ENCODE measurements at regions of chr1 and their contacts with region 1.

Region 1: DNA sequence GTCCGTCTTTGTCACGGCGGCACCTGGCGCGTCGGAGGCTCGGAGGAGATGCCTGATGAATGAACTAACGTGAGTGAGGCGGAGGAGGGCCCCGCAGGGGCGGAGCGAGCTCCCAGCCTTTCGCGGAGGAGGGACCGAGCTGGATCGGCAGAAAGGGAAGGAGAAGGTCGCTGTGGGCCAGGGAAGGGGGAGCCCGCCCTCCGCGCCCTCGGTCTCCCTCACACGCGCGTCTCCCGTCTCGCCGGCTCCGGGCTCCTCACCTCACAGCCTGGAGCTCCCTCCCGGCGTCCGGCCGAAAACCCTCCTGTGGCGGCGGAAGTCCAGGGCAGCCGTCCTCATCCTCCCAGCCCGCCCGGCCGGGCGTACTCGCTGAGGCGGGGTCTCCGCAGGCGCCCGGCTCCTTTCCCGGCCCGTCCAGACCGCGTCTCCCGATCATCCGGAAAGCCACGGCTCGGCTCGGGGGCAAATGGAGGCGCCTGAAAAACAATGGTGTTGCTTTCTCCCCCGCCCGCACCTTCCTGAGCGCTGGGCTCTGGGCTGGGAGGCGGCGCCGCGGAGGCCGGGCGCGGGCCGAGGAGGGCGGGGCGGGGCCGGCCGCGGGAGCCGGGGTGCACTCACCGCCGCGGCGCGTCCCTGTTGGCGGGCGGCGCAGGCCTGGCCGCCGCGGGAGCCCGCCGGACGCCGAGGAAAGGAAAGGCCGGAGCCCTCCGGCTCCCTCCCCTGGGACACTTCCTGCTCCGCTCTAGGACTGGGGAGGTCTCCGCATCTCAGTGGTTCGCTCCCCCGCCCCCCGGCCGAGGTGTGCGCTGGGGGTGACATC is at the start of gene ZNF496:
- DNase-seq: peak; percentile 65
- H3K4me3 Mint-ChIP-seq: peak within 1 kb of the TSS; percentile 92
- H3K27ac Mint-ChIP-seq: peak within 1 kb of the TSS; percentile 90
- H3K4me1 Mint-ChIP-seq: peaks cover 21% of the 10 kb centered on the region
- H3K27me3 Mint-ChIP-seq: no peaks in the 10 kb centered on the region
- total RNA-seq, gene ZNF496: 13.8 and 14.8 TPM in 2 replicates

Region 2: DNA sequence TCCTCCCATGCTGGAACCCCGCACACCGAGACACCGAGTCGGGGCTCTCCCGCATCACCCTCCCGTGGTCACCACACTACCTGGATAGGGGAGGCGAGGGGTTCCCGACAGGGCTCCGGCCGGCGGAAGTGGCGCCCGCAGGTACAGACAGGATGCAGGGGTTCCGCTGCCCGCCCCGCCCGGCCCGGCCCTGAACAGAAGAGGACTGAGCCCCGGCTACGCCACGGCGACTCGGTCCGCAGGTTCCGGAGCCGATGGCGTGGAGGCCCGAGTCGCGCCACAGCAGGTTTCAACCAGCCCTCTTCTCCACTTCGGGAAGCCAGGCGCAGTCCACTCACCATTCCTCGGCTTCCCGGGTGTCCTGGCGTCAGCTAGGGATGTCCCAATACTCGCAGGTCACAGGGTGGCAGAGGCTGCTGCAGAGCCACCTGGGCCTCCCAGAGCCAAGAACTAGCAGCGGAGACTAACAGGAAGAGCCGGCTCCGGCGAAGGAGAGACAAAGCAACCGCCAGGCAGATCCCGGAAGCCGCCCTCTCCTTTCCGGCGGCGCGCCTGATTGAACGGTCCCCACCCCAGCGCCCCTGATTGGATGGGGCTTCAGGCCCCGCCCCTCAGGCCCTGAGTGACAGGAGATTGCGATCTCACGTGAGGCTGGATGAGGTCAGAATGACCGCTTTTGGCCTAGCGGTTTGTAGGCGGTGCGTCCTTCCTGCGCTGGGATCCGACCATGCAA is 227.4 kb before region 1 on chr1 and contains the start of gene ZNF669:
- intact Hi-C with region 1: loop called (anchors 5 kb)
- DNase-seq: peak; percentile 86
- H3K4me3 Mint-ChIP-seq: peak within 1 kb of the TSS; percentile 91
- H3K27ac Mint-ChIP-seq: peak within 1 kb of the TSS; percentile 74
- H3K4me1 Mint-ChIP-seq: peaks cover 15% of the 10 kb centered on the region
- H3K27me3 Mint-ChIP-seq: peaks cover 14% of the 10 kb centered on the region
- total RNA-seq, gene ZNF669: 8.0 and 9.5 TPM in 2 replicates

Region 3: GRCh38 chr1:247165674-247166073 is 165.7 kb before region 1 on chr1:
- intact Hi-C with region 1: no loop called
- DNase-seq: no peak
- H3K4me3 Mint-ChIP-seq: no peak overlapping the region
- H3K27ac Mint-ChIP-seq: no peak overlapping the region
- H3K4me1 Mint-ChIP-seq: peaks cover 11% of the 10 kb centered on the region
- H3K27me3 Mint-ChIP-seq: no peaks in the 10 kb centered on the region

Region 4: DNA sequence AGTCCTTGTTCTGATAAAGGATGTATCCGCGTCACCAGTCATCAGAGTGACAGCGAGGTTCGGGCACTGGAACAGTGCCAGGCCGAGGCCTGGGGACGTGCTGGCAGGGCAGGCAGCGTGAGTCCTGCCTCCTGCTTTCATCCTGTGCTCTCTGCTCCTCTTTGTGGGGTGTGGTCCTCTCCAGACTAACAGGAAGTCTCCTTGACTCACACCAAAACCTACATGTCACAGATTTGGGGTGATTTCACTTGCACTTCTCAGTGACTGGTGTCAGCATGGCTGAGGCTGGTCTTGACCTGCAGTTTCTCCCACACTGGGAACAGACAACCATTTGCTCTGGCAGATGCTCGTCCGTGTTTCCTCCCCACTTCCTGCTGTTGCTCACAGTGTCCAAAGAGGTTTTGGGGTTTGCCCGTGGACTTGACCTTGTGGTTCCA is 75.8 kb after region 1 on chr1:
- intact Hi-C with region 1: loop called (anchors 2 kb)
- DNase-seq: peak; percentile 35
- H3K4me3 Mint-ChIP-seq: peak overlapping the region; percentile 40
- H3K27ac Mint-ChIP-seq: peak overlapping the region; percentile 27
- H3K4me1 Mint-ChIP-seq: peaks cover 34% of the 10 kb centered on the region
- H3K27me3 Mint-ChIP-seq: peaks cover 32% of the 10 kb centered on the region

Region 5: GRCh38 chr1:247506831-247507230 is 175.4 kb after region 1 on chr1:
- intact Hi-C with region 1: no loop called
- DNase-seq: no peak
- H3K4me3 Mint-ChIP-seq: no peak overlapping the region
- H3K27ac Mint-ChIP-seq: no peak overlapping the region
- H3K4me1 Mint-ChIP-seq: no peaks in the 10 kb centered on the region
- H3K27me3 Mint-ChIP-seq: no peaks in the 10 kb centered on the region

Region 6: DNA sequence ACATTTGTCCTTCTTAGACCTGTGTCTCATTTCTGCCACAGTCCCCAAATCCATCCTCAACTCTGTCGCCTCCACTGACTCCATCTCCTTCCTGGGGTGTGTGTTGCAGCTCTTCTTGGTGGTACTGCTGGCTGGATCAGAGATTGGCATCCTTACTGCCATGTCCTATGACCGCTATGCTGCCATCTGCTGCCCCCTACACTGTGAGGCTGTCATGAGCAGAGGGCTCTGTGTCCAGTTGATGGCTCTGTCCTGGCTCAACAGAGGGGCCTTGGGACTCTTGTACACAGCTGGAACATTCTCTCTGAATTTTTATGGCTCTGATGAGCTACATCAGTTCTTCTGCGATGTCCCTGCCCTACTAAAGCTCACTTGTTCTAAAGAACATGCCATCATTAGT is 407.4 kb after region 1 on chr1:
- intact Hi-C with region 1: no loop called
- DNase-seq: no peak
- H3K4me3 Mint-ChIP-seq: no peak overlapping the region
- H3K27ac Mint-ChIP-seq: no peak overlapping the region
- H3K4me1 Mint-ChIP-seq: no peaks in the 10 kb centered on the region
- H3K27me3 Mint-ChIP-seq: no peaks in the 10 kb centered on the region